ENCODE measurements at regions of chr7 and their contacts with region 1.

Region 1: GRCh38 chr7:157309990-157310668 is 26.7 kb upstream of the DNAJB6 start:
- DNase-seq: peak in 1 of 2 donors; percentile 80
- H3K4me3 ChIP-seq: no peak overlapping the region
- H3K27ac ChIP-seq: peak overlapping the region; percentile 90 to 93
- H3K4me1 ChIP-seq: no peaks in the 10 kb centered on the region
- H3K27me3 ChIP-seq: no peaks in the 10 kb centered on the region
- CTCF ChIP-seq: no peak
- POLR2A ChIP-seq: no peak

Region 2: GRCh38 chr7:157228864-157229422 is 81.2 kb before region 1 on chr7:
- intact Hi-C with region 1: loop called (anchors 2 kb)
- DNase-seq: no peak
- H3K4me3 ChIP-seq: no peak overlapping the region
- H3K27ac ChIP-seq: no peak overlapping the region
- H3K4me1 ChIP-seq: no peaks in the 10 kb centered on the region
- H3K27me3 ChIP-seq: no peaks in the 10 kb centered on the region
- CTCF ChIP-seq: no peak
- POLR2A ChIP-seq: no peak